Activated B cell treated with CpG ODN at 0.5 μM for 24 hours (primary cell): ENCODE measurements at regions of chr16 and their contacts with region 1.

Region 1: DNA sequence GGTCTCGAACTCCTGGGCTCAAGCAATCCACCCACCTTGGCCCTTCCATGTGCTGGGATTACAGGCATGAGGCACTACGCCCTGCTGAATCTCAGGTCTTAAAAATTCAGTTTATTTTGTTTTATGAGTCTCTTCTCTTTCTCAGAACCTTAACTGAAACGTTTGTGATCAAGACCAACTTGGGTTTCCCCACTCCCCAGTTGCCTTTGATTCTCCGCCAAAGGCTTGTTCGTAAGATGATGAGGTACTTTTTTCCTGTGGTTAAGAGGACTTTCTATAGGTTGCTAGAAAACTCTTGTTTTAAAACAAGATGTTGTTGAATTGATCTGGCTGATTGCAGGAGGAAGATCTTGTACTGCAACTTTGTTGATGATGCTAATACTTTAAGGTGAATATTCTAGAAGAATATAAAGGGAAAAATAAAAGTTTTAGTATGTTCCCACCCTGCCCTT is 11.7 kb downstream of the ABCC1 start:
- DNase-seq: no peak
- ATAC-seq: peak; percentile 86
- H3K4me3 Mint-ChIP-seq: peak overlapping the region; percentile 73
- H3K27ac Mint-ChIP-seq: peak overlapping the region; percentile 87
- H3K4me1 Mint-ChIP-seq: peaks cover 54% of the 10 kb centered on the region
- H3K27me3 Mint-ChIP-seq: no peaks in the 10 kb centered on the region
- CTCF ChIP-seq: no peak

Region 2: DNA sequence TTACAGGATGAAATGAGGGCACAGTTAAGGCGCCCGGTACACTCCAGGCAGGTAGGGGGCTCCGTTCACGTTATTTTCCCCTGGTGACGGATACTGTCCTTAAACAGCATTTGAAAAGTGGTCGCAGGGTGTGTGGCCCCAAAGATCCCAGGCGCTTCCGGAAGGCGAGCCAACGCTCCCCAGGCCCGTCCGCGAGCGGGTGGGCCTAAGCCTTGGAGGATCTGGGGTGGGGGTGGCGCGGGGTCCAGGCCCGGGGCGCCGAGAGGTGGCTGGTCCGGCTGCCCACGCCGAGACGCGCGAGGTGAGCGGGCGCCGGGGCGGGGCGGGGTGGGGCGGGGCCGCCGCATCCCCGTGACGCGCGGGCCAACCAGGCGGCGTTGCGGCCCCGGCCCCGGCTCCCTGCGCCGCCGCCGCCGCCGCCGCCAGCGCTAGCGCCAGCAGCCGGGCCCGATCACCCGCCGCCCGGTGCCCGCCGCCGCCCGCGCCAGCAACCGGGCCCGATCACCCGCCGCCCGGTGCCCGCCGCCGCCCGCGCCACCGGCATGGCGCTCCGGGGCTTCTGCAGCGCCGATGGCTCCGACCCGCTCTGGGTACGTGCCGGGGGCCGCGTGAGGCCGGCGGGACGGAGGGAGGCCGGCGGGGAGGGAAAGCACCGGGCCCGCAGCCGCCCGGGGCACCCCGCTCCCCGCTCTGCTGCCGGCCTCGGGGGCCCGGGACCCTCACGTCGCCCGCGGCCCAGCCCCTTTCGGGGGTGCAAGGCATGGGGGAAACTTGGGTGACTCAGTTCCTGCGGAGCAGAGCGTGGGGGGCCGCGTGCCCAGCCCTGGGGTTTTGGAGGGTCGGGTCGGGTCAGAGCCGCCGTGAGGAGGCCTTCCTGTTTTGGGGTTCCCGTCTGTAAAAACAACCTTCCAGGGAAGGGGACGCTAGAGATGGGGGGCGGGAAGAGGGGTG is 11.6 kb before region 1 on chr16 and contains the start of gene ABCC1:
- CTCF ChIA-PET with region 1: no interaction called
- POLR2A ChIA-PET with region 1: interaction called, 6 read pairs
- intact Hi-C with region 1: loop called (anchors 1 kb)
- DNase-seq: peak; percentile 53
- ATAC-seq: peak; percentile 80
- H3K4me3 Mint-ChIP-seq: peak within 1 kb of the TSS; percentile 93
- H3K27ac Mint-ChIP-seq: peak within 1 kb of the TSS; percentile 91
- H3K4me1 Mint-ChIP-seq: peaks cover 40% of the 10 kb centered on the region
- H3K27me3 Mint-ChIP-seq: no peaks in the 10 kb centered on the region
- CTCF ChIP-seq: no peak
- total RNA-seq, gene ABCC1: 46.5 and 49.8 TPM in 2 replicates